Posterior vena cava (tissue), 2 donors: ENCODE measurements at regions of chr2 and their contacts with region 1.

Region 1: DNA sequence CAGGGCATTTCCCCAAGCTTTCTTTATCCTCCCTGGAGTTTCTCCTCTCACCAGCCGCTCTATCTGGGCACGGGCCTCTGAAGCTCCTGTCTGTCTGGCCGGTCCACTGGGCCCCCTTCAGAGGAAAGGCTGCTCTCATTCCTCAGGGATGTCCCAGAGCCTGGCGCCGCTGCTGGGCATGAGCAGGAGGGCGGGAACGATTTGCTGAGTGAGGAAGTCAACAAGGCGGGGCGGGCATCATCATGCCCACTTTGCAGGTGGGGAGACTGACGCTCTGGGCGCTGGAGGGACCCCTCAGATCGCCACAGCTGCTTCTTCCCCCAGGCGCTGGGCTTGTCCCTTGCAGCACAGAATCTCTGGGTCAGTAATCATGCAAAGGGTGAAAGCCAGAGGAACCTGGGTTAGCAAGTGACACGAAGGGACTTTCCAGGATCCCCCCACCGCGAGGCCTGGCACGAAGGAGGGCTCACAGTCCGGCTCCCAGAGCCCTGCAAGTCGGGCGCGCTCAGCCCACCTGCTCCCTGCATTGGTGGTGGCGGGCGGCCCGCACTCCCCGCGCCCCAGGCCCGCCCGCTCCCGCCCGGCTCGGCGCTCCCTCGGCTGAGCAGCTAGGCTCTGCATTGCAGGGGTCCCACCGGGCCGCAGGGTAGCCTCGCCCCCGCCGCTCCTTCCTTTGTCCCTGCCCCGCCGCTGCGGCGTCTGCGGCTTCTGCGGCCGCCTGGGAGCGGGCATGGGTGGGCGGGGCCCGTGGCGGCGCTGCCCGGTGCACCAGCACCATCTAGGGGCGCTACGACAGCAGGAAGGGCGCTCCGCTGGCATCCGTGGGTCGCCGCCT is 157.8 kb downstream of the CYRIA start:
- DNase-seq: no peak

Region 2: DNA sequence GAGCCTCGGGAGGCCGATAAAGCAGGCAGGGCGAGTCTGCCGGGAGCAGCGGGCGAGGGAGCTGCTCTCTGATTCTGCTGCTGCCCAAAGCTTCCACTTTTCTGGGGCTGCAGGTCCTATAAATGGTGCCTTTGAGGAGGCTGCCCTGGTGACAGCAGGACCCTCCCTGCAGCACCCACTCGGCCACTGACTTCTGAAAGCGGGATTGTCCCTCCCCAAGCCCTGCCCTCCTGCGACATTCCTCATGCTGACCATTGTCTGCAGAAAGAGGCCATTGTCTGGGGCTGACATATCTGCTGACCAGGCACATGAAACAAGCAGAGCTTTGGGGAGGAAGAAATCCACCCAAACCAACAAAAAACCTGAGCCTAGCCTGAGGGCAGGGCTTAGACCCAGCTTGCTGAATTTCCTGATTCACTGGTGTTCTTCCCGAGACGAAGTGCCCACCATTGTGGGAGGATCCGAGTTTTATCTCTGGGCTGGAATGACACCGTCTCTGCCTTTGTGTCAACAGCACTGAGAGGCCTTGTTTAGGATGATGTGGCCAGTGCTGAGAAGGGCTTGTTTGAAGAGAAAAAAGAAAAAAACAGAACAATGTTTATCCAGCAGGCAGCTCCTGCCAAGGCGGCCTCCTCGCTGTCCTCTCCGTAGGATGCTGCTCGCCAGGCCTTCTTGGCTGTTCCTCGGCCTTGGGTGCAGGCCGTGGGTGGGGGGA is 437.8 kb before region 1 on chr2:
- intact Hi-C with region 1: no loop called
- DNase-seq: no peak

Region 3: GRCh38 chr2:17690776-17691175 is 1182.9 kb after region 1 on chr2:
- intact Hi-C with region 1: loop called in 1 of 2 experiments (anchors 5 kb)
- DNase-seq: no peak